Heart right ventricle (tissue), 16 donors: ENCODE measurements at regions of chr7 and their contacts with region 1.

Region 1: GRCh38 chr7:25409897-25410636 is 181.8 kb upstream of the NPVF start:
- DNase-seq: no peak
- ATAC-seq: no peak
- H3K4me3 ChIP-seq: no peak overlapping the region
- H3K27ac ChIP-seq: no peak overlapping the region
- H3K4me1 ChIP-seq: no peaks in the 10 kb centered on the region
- H3K27me3 ChIP-seq: no peaks in the 10 kb centered on the region
- CTCF ChIP-seq: no peak

Region 2: GRCh38 chr7:26729150-26729775 is 1319.2 kb after region 1 on chr7:
- intact Hi-C with region 1: loop called in 1 of 10 experiments (anchors 5 kb)
- DNase-seq: no peak
- ATAC-seq: no peak
- H3K4me3 ChIP-seq: no peak overlapping the region
- H3K27ac ChIP-seq: peak overlapping the region in 1 of 10 donors; percentile 24
- H3K4me1 ChIP-seq: peaks cover 0 to 9% (median 0%) of the 10 kb centered on the region in 9 donors
- H3K27me3 ChIP-seq: peaks cover 0 to 5% (median 0%) of the 10 kb centered on the region in 7 donors
- CTCF ChIP-seq: no peak